GM12878 (cell line): ENCODE measurements at regions of chr18 and their contacts with region 1.

Region 1: GRCh38 chr18:61702007-61702406 is 190.8 kb downstream of the RNF152 start:
- DNase-seq: no peak
- ATAC-seq: no peak
- H3K4me3 ChIP-seq: no peak overlapping the region
- H3K27ac ChIP-seq: no peak overlapping the region
- H3K4me1 ChIP-seq: no peaks in the 10 kb centered on the region
- H3K27me3 ChIP-seq: no peaks in the 10 kb centered on the region
- CTCF ChIP-seq: no peak
- EP300 ChIP-seq: no peak
- POLR2A ChIP-seq: no peak
- RAD21 ChIP-seq: no peak

Region 2: GRCh38 chr18:61669320-61669719 is 32.7 kb before region 1 on chr18:
- CTCF ChIA-PET with region 1: no interaction called
- POLR2A ChIA-PET with region 1: no interaction called
- RAD21 ChIA-PET with region 1: no interaction called
- SMC1A ChIA-PET with region 1: no interaction called
- in situ Hi-C with region 1: no loop called
- intact Hi-C with region 1: loop called (anchors 1 kb)
- DNase-seq: no peak
- ATAC-seq: no peak
- H3K4me3 ChIP-seq: no peak overlapping the region
- H3K27ac ChIP-seq: no peak overlapping the region
- H3K4me1 ChIP-seq: no peaks in the 10 kb centered on the region
- H3K27me3 ChIP-seq: no peaks in the 10 kb centered on the region
- CTCF ChIP-seq: no peak
- EP300 ChIP-seq: no peak
- POLR2A ChIP-seq: no peak
- RAD21 ChIP-seq: no peak

Region 3: DNA sequence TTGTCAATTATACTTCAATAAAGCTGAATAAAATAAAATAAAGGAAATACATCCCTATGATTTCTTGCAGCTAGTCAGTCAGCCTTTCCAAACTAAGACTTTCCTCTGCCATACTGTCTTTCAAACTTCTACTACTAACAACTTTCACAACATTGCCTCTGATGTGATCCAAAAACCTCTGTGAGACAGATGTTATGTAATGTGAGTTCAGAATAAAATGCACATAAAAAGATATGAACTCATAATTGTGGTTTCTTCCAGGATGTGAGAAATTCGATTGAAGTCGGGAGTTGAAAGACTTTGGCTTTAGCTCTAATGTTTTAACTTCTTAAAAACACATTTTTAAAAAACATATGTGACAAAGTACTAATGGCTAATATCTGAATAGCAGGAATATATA is 386.1 kb after region 1 on chr18:
- CTCF ChIA-PET with region 1: no interaction called
- POLR2A ChIA-PET with region 1: no interaction called
- RAD21 ChIA-PET with region 1: no interaction called
- SMC1A ChIA-PET with region 1: no interaction called
- in situ Hi-C with region 1: no loop called
- intact Hi-C with region 1: no loop called
- DNase-seq: no peak
- ATAC-seq: no peak
- H3K4me3 ChIP-seq: no peak overlapping the region
- H3K27ac ChIP-seq: no peak overlapping the region
- H3K4me1 ChIP-seq: no peaks in the 10 kb centered on the region
- H3K27me3 ChIP-seq: no peaks in the 10 kb centered on the region
- CTCF ChIP-seq: no peak
- EP300 ChIP-seq: no peak
- POLR2A ChIP-seq: no peak
- RAD21 ChIP-seq: no peak